BJ (cell line): ENCODE measurements at regions of chr16 and their contacts with region 1.

Region 1: GRCh38 chr16:86761111-86762031 is 183.0 kb downstream of the FOXL1 start:
- DNase-seq: peak; percentile 61
- H3K4me3 ChIP-seq: 0 out of 2 replicates have a peak overlapping the region, but pooled peaks have one; percentile 1
- H3K27me3 ChIP-seq: peaks cover 2% of the 10 kb centered on the region; the same call in 1 of the 2 replicates
- CTCF ChIP-seq: peak; percentile 93

Region 2: GRCh38 chr16:86751076-86752030 is 10.0 kb before region 1 on chr16:
- CTCF ChIA-PET with region 1: interaction called, 10 read pairs
- POLR2A ChIA-PET with region 1: no interaction called
- DNase-seq: peak; percentile 57
- H3K4me3 ChIP-seq: no peak overlapping the region
- H3K27me3 ChIP-seq: no peaks in the 10 kb centered on the region
- CTCF ChIP-seq: no peak

Region 3: GRCh38 chr16:86772671-86773353 is 11.4 kb after region 1 on chr16:
- CTCF ChIA-PET with region 1: interaction called, 18 read pairs
- POLR2A ChIA-PET with region 1: no interaction called
- DNase-seq: peak; percentile 59
- H3K4me3 ChIP-seq: no peak overlapping the region
- H3K27me3 ChIP-seq: peaks cover 1% of the 10 kb centered on the region
- CTCF ChIP-seq: no peak